ENCODE measurements at regions of chr19 and their contacts with region 1.

Region 1: GRCh38 chr19:2648528-2648937 is 54.0 kb downstream of the GNG7 start:
- DNase-seq: peak; percentile 79
- ATAC-seq: peak; percentile 85 to 90

Region 2: GRCh38 chr19:2337329-2338043 is 311.0 kb before region 1 on chr19:
- intact Hi-C with region 1: no loop called
- DNase-seq: no peak
- ATAC-seq: peak; percentile 5 to 17

Region 3: GRCh38 chr19:2691951-2692350 is 43.4 kb after region 1 on chr19:
- intact Hi-C with region 1: no loop called
- DNase-seq: no peak
- ATAC-seq: no peak

Region 4: DNA sequence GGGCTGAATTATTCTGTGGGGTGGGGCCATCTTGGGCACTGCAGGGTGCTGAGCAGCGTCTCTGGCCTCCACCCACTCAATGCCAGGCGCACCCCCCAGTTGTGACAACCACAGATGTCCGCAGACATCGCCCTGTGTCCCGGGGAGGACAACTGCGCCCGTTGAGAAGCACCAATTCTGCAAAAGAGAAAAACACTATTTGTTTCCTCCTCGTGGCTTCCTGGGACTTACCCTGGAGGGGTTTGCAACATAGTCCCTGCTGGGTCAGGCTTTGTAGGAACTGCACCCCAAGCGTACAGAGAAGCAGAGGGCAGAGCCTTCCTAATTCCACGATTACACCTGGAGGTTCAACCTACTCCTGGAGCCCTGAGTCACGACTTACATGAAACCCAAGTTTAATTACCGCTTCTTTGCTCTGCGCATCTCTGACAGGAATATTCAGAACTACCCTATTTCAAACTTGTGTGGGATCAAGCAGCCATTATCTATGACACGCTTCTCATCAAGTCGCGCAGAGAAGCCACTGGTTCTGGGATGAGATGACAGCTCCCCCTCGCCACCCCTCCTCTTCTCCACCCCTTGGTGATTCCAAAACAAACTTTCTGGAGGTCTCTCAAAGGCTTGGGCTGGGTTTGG is 102.4 kb after region 1 on chr19:
- intact Hi-C with region 1: loop called (anchors 1 to 5 kb)
- DNase-seq: no peak
- ATAC-seq: no peak

Region 5: GRCh38 chr19:2869618-2870017 is 221.1 kb after region 1 on chr19:
- intact Hi-C with region 1: loop called in 1 of 2 experiments (anchors 5 kb)
- DNase-seq: no peak
- ATAC-seq: no peak